ENCODE measurements at regions of chr1 and their contacts with region 1.

Region 1: GRCh38 chr1:215114154-215114933 is 31.8 kb downstream of the KCNK2 start:
- DNase-seq: peak; percentile 92
- H3K4me3 ChIP-seq: peak overlapping the region in 1 of 3 experiments; percentile 1
- H3K27ac ChIP-seq: peak overlapping the region; percentile 87
- H3K4me1 ChIP-seq: peaks cover 22% of the 10 kb centered on the region
- H3K27me3 ChIP-seq: no peaks in the 10 kb centered on the region
- CTCF ChIP-seq: no peak
- POLR2A ChIP-seq: peak; percentile 51

Region 2: GRCh38 chr1:214901718-214902117 is 212.6 kb before region 1 on chr1:
- CTCF ChIA-PET with region 1: no interaction called
- POLR2A ChIA-PET with region 1: no interaction called
- dilution Hi-C with region 1: no loop called
- intact Hi-C with region 1: loop called (anchors 1 kb)
- DNase-seq: peak; percentile 70
- H3K4me3 ChIP-seq: no peak overlapping the region
- H3K27ac ChIP-seq: peak overlapping the region; percentile 61
- H3K4me1 ChIP-seq: peaks cover 28% of the 10 kb centered on the region
- H3K27me3 ChIP-seq: no peaks in the 10 kb centered on the region
- CTCF ChIP-seq: no peak
- POLR2A ChIP-seq: no peak

Region 3: DNA sequence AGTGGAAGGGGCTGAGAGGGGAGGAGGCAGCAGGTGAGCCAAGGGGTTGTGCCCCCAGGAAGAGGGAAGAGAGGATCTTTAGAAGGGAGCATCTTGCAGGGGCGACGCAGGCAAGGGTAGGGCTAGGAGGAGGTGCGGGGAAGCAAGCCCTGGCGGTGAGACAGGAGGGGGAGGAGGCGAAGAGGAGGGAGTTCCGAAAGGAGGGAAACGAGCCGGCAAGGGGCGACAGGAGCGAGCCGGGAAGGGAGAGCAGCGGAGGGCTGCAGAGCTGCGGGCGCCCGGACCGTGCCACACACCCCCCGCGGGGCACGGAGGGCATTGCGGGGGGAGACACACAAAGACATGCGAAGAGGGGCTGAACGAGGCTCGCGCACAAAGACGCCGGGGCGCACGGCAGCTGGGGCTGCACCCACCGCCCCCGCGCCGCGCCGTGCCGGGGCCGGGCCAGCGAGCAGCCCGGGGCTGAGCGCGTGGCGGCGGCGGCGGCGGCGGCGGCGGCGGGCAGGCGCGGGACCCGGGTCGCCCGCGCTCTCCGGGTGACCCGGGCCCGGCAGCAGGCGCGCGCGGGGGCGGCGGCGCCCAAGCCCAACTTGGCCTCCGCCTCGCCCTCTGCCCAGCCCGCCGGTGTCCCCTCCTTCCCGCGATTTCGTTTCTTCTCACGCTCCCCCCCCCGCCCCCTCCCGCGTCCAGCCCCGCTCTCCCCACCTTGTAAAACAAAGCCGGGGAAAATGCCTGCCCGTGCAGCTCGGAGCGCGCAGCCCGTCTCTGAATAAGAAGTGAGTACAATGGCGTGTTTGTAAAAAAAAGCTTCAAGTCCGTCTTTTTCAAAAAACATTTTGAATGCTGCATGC is 31.6 kb before region 1 on chr1 and contains the start of gene KCNK2:
- CTCF ChIA-PET with region 1: interaction called, 3 read pairs
- POLR2A ChIA-PET with region 1: no interaction called
- dilution Hi-C with region 1: no loop called
- intact Hi-C with region 1: loop called (anchors 1 kb)
- DNase-seq: no peak
- H3K4me3 ChIP-seq: peak within 1 kb of the TSS in 2 of 3 experiments; percentile 19 to 45
- H3K27ac ChIP-seq: no peak within 1 kb of the TSS
- H3K4me1 ChIP-seq: peaks cover 7% of the 10 kb centered on the region
- H3K27me3 ChIP-seq: peaks cover 26 to 33% of the 10 kb centered on the region in 2 experiments
- CTCF ChIP-seq: no peak
- POLR2A ChIP-seq: no peak
- total RNA-seq, gene KCNK2: 0.18 and 0.46 TPM in 2 replicates

Region 4: GRCh38 chr1:215132156-215132555 is 17.8 kb after region 1 on chr1:
- CTCF ChIA-PET with region 1: no interaction called
- POLR2A ChIA-PET with region 1: no interaction called
- dilution Hi-C with region 1: no loop called
- intact Hi-C with region 1: no loop called
- DNase-seq: no peak
- H3K4me3 ChIP-seq: no peak overlapping the region
- H3K27ac ChIP-seq: no peak overlapping the region
- H3K4me1 ChIP-seq: no peaks in the 10 kb centered on the region
- H3K27me3 ChIP-seq: no peaks in the 10 kb centered on the region
- CTCF ChIP-seq: no peak
- POLR2A ChIP-seq: no peak

Region 5: GRCh38 chr1:215282557-215282956 is 168.2 kb after region 1 on chr1:
- CTCF ChIA-PET with region 1: no interaction called
- POLR2A ChIA-PET with region 1: no interaction called
- dilution Hi-C with region 1: no loop called
- intact Hi-C with region 1: loop called (anchors 1 kb)
- DNase-seq: peak; percentile 39
- H3K4me3 ChIP-seq: no peak overlapping the region
- H3K27ac ChIP-seq: peak overlapping the region; percentile 56
- H3K4me1 ChIP-seq: peaks cover 20% of the 10 kb centered on the region
- H3K27me3 ChIP-seq: no peaks in the 10 kb centered on the region
- CTCF ChIP-seq: no peak
- POLR2A ChIP-seq: peak; percentile 42

Region 6: DNA sequence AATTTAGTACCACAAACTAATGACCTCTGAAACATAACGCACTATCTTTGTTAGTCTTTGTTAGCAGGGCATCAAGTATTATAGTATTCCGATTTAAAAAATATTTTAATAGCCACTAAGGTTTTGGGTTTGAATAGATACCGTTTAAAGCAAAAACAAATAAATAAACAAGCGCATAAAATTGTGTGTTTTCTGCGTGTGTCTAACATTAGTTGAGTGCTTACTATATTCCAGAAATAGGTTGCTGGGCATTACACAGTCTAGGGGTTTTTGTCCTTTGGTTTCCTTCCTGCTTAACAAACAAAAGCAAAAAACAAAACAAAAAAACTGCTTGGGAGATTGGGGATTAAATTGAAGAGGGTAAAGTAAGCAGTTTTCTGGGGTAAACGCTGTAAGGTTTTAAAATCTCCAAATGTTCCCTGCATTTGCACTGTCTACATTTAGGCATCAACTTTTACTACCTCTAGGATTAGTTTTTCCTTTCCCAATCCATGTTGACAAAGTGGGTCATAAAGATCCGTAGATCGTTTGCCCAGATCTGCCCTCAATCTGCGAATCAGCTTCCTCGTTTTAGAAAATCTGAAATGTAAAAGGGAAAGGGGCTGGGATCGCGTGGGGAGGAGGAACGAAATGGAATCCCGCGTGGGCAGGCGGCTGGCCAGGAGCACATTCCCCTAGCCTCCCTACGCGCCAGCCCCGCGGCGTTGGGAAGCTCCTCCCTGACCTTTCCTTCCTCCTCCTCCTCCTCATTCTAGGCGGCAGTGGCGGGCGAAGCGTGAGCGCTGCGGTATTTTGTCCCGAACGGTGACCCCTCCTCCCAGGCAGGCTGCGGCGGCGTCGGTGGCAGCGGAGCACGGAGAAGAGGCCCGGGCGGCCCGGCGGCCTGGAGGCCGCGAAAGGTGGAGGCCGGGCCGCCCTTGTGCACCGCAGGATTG is 452.5 kb after region 1 on chr1 and contains the start of gene KCTD3:
- CTCF ChIA-PET with region 1: no interaction called
- POLR2A ChIA-PET with region 1: no interaction called
- dilution Hi-C with region 1: no loop called
- intact Hi-C with region 1: loop called (anchors 1 kb)
- DNase-seq: peak; percentile 74
- H3K4me3 ChIP-seq: peak within 1 kb of the TSS; percentile 29 to 94 (median 85)
- H3K27ac ChIP-seq: peak within 1 kb of the TSS; percentile 91
- H3K4me1 ChIP-seq: peaks cover 20% of the 10 kb centered on the region
- H3K27me3 ChIP-seq: no peaks in the 10 kb centered on the region
- CTCF ChIP-seq: no peak
- POLR2A ChIP-seq: peak; percentile 63
- total RNA-seq, gene KCTD3: 28.3 and 31.1 TPM in 2 replicates